ENCODE measurements at regions of chr6 and their contacts with region 1.

Region 1: DNA sequence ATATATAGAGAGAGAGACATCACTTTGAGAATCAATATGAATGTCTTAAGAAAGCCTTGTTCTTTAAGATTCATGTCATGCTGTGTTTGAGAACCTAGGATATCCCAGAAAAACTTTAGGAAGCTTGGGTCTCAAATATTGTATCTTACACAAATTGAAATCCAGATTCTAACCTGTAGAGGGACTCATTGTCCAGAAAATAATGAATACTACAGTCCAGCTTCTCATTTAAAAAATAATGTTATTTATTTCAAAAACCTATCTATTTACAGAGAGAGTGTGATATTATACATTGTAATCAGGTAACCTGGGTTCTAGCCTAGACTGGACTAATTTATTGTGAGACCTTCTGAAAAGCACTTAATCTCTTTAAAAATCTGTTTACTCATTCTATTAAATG is 4.2 kb downstream of the RFX6 start:
- DNase-seq: no peak

Region 2: DNA sequence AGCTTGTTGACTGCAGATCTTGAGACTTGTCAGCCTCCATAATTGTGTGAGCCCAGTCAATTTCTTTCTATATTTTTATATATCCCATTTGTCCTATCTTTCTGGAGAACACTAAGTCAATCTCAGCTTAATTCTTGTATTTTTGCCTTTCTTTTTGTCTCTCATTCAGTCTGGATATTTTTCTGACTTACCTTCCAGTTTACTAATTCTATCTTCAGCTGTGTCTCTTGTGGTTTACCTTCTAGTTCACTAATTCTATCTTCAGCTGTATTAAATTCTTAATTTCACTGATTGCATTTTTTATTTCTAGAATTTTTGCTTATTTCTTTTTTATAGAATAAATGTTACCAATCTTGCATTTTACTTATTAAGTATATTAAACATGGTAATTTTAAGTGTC is 22.0 kb before region 1 on chr6:
- CTCF ChIA-PET with region 1: no interaction called
- POLR2A ChIA-PET with region 1: no interaction called
- DNase-seq: no peak

Region 3: DNA sequence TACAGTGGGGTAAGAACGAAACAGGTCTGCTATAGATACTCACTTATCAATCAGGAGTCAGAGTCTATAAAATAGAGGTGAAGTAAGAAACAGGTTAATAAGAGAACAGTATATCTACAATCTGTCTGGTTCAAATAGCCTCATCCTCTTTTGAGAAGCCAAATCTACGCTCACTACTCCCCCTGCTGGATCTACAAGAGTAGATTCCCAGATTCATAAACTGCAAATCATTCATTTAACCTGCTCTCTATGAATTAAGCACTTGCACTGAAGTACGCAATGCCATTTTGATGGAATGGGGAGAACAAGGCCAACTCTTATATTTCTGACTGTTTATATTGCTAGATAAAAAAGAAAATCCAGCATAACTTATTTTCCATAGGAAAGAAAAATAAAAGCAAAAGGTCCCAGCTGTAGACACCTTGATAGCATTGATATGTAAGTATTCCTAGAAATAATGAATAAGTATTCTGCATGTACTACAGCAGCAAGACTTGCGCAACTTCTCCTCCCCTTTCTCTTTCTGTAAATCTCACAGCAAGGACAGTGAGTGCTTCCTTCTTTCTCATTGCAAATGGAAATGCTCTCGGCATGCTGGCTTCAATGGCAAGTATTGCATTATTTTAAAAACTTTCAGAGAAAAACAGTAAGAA is 88.1 kb after region 1 on chr6:
- CTCF ChIA-PET with region 1: interaction called, 58 read pairs
- POLR2A ChIA-PET with region 1: no interaction called
- DNase-seq: peak; percentile 69